Testis (tissue), 5 donors: ENCODE measurements at regions of chr19 and their contacts with region 1.

Region 1: GRCh38 chr19:46759817-46760333 is 13.6 kb upstream of the STRN4 start:
- DNase-seq: peak; percentile 69
- H3K4me3 ChIP-seq: no peak overlapping the region
- H3K27ac ChIP-seq: peak overlapping the region in 1 of 2 donors; percentile 68
- H3K4me1 ChIP-seq: peaks cover 4% of the 10 kb centered on the region
- H3K27me3 ChIP-seq: no peaks in the 10 kb centered on the region
- CTCF ChIP-seq: no peak
- POLR2A ChIP-seq: no peak

Region 2: GRCh38 chr19:46674416-46675183 is 85.3 kb before region 1 on chr19:
- intact Hi-C with region 1: no loop called
- DNase-seq: peak; percentile 71
- H3K4me3 ChIP-seq: no peak overlapping the region
- H3K27ac ChIP-seq: peak overlapping the region in 1 of 2 donors; percentile 24
- H3K4me1 ChIP-seq: no peaks in the 10 kb centered on the region
- H3K27me3 ChIP-seq: no peaks in the 10 kb centered on the region
- CTCF ChIP-seq: no peak
- POLR2A ChIP-seq: no peak

Region 3: DNA sequence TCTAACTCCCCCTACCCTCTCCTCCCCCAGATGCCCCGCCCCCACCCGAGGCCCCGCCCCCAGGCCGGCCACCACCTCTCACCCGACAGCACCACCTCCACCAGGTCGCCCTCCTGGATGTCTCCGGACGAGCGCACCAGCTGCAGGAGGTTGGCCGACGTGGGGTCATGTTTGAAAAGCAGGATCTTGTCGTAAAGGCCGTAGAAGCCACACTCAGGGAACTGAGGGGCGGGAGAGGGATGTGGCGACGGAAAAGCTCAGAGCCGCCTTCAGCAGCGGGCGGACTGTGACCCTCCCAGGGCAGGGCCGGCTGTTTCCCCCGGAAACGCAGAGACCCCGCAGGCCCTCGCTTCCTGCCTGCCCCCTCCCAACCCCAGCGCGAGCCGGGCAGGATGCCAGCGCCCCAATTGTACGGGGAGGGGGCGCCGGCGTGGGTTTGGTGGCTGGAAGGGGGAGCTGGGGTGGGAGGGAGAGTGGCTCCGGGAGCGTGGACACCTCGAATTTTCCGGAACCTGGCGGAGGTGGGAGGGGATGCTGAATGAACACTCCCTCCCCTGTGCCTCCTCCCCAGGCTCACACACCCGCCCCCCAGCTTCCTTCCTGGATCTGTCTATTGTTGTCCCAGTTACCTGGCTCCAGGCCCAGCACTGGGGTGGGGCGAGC is 46.0 kb before region 1 on chr19:
- intact Hi-C with region 1: no loop called
- DNase-seq: peak; percentile 92
- H3K4me3 ChIP-seq: peak overlapping the region; percentile 60 to 69
- H3K27ac ChIP-seq: peak overlapping the region; percentile 78 to 89
- H3K4me1 ChIP-seq: peaks cover 20% of the 10 kb centered on the region
- H3K27me3 ChIP-seq: no peaks in the 10 kb centered on the region
- CTCF ChIP-seq: no peak
- POLR2A ChIP-seq: no peak

Region 4: GRCh38 chr19:46840136-46840942 is 80.5 kb after region 1 on chr19:
- intact Hi-C with region 1: loop called (anchors 5 kb)
- DNase-seq: peak; percentile 68
- H3K4me3 ChIP-seq: no peak overlapping the region
- H3K27ac ChIP-seq: peak overlapping the region; percentile 19 to 61
- H3K4me1 ChIP-seq: no peaks in the 10 kb centered on the region
- H3K27me3 ChIP-seq: no peaks in the 10 kb centered on the region
- CTCF ChIP-seq: peak; percentile 80 to 90 (median 81)
- POLR2A ChIP-seq: no peak